A549 (cell line): ENCODE measurements at regions of chr22 and their contacts with region 1.

Region 1: GRCh38 chr22:41596776-41597634 is 7.4 kb upstream of the PMM1 start:
- DNase-seq: peak; percentile 60 to 61
- ATAC-seq: peak; percentile 89 to 95
- H3K4me3 ChIP-seq: no peak overlapping the region
- H3K27ac ChIP-seq: peak overlapping the region in 1 of 2 experiments; percentile 58; a peak in 3 of 6 replicates
- H3K4me1 ChIP-seq: peaks cover 23% of the 10 kb centered on the region
- CTCF ChIP-seq: peak; percentile 68
- EP300 ChIP-seq: no peak
- POLR2A ChIP-seq: no peak
- RAD21 ChIP-seq: peak; percentile 76 to 86

Region 2: DNA sequence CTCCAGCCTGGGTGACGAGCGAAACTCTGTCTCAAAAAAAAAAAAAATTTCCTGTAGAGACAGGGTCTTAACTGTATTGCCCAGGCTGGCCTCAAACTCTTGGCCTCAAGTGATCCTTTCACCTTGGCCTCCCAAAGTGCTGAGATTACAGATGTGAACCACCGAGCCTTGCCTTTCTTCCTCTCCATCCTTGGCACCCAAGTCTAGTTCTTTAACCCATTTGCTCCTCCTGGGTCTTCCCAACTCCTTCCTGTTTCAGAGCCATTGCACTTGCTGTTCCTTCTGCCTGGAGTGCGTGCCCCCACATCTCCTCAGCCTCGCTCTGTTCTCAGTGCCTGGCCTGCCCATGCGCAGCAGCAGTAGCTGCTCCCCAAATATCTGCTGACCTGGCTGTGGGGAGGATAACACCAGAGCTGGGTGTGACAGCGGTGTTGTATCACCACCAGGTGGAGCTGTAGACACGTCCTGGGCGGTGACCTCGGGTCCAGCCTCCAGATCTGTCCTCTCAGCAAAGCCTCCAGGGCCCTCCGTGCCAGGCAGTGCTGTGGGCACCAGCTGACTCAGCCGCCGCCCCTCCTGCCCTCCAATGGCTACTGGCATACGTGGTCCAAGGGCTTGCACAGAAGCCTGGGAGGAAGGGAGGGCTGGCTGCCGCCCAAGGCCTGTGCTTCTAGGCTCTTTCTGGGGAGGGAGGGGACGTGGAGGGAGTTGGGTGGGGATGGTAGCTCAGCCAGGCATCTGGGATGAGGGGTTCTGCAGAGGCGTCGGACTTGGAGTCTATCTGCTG is 193.3 kb before region 1 on chr22:
- CTCF ChIA-PET with region 1: interaction called, 10 read pairs
- POLR2A ChIA-PET with region 1: no interaction called
- DNase-seq: peak; percentile 86 to 96
- ATAC-seq: peak; percentile 93 to 99
- H3K4me3 ChIP-seq: no peak overlapping the region
- H3K27ac ChIP-seq: peak overlapping the region; percentile 40 to 91; a peak in 4 of 6 replicates
- H3K4me1 ChIP-seq: peaks cover 13% of the 10 kb centered on the region
- CTCF ChIP-seq: peak; percentile 79
- EP300 ChIP-seq: no peak
- POLR2A ChIP-seq: no peak
- RAD21 ChIP-seq: peak; percentile 85 to 92

Region 3: GRCh38 chr22:41543854-41544670 is 52.9 kb before region 1 on chr22 and contains the start of gene POLR3H:
- CTCF ChIA-PET with region 1: interaction called, 23 read pairs
- POLR2A ChIA-PET with region 1: no interaction called
- DNase-seq: peak; percentile 82 to 93
- ATAC-seq: peak; percentile 93 to 97
- H3K4me3 ChIP-seq: peak within 1 kb of the TSS; percentile 98
- H3K27ac ChIP-seq: peak within 1 kb of the TSS; percentile 94 to 99
- H3K4me1 ChIP-seq: peaks cover 20% of the 10 kb centered on the region
- CTCF ChIP-seq: peak; percentile 70
- EP300 ChIP-seq: no peak
- POLR2A ChIP-seq: peak; percentile 78
- RAD21 ChIP-seq: peak; percentile 52 to 55
- polyA plus RNA-seq, gene POLR3H: 24.5 and 26.0 TPM in 2 replicates

Region 4: GRCh38 chr22:41576877-41577276 is 20.1 kb before region 1 on chr22:
- CTCF ChIA-PET with region 1: interaction called, 17 read pairs
- POLR2A ChIA-PET with region 1: no interaction called
- DNase-seq: peak; percentile 60 to 72
- ATAC-seq: peak; percentile 89
- H3K4me3 ChIP-seq: no peak overlapping the region
- H3K27ac ChIP-seq: no peak overlapping the region
- H3K4me1 ChIP-seq: no peaks in the 10 kb centered on the region
- CTCF ChIP-seq: peak; percentile 56
- EP300 ChIP-seq: no peak
- POLR2A ChIP-seq: no peak
- RAD21 ChIP-seq: peak; percentile 61 to 74

Region 5: GRCh38 chr22:41613456-41613855 is 16.5 kb after region 1 on chr22:
- CTCF ChIA-PET with region 1: interaction called, 46 read pairs
- POLR2A ChIA-PET with region 1: no interaction called
- DNase-seq: no peak
- ATAC-seq: no peak
- H3K4me3 ChIP-seq: no peak overlapping the region
- H3K27ac ChIP-seq: no peak overlapping the region
- H3K4me1 ChIP-seq: peaks cover 7% of the 10 kb centered on the region; the same call in 2 of the 3 replicates
- CTCF ChIP-seq: no peak
- EP300 ChIP-seq: no peak
- POLR2A ChIP-seq: no peak
- RAD21 ChIP-seq: no peak

Region 6: DNA sequence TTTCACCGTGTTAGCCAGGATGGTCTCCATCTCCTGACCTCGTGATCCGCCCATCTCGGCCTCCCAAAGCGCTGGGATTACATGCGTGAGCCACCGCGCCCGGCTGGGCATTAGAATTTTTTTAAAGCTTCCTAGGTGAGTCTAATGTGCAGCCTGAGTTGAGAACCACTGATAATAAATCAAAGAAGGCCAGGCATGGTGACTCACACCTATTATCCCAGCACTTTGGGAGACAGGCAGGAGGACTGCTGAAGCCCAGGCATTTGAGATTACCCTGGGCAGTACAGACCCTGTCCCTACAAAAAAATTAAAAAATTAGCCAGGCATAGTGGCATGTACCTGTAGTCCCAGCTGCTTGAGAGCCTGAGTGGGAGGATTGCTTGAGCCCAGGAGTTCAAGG is 116.0 kb after region 1 on chr22:
- CTCF ChIA-PET with region 1: no interaction called
- POLR2A ChIA-PET with region 1: no interaction called
- DNase-seq: no peak
- ATAC-seq: 0 out of 6 replicates have a peak, but pooled peaks of 1 of the 2 experiments have one; percentile 22
- H3K4me3 ChIP-seq: no peak overlapping the region
- H3K27ac ChIP-seq: no peak overlapping the region
- H3K4me1 ChIP-seq: no peaks in the 10 kb centered on the region
- CTCF ChIP-seq: no peak
- EP300 ChIP-seq: no peak
- POLR2A ChIP-seq: no peak
- RAD21 ChIP-seq: no peak